Endothelial cell of umbilical vein (primary cell): ENCODE measurements at regions of chr1 and their contacts with region 1.

Region 1: GRCh38 chr1:152654110-152654509 is 9.1 kb upstream of the LCE2D start:
- DNase-seq: peak; percentile 53
- H3K4me3 ChIP-seq: no peak overlapping the region
- H3K27ac ChIP-seq: no peak overlapping the region
- H3K4me1 ChIP-seq: no peaks in the 10 kb centered on the region
- H3K27me3 ChIP-seq: no peaks in the 10 kb centered on the region
- CTCF ChIP-seq: peak; percentile 68 to 81
- POLR2A ChIP-seq: no peak

Region 2: GRCh38 chr1:152440635-152441471 is 213.3 kb before region 1 on chr1:
- CTCF ChIA-PET with region 1: no interaction called
- POLR2A ChIA-PET with region 1: no interaction called
- dilution Hi-C with region 1: no loop called
- intact Hi-C with region 1: no loop called
- DNase-seq: peak; percentile 57
- H3K4me3 ChIP-seq: no peak overlapping the region
- H3K27ac ChIP-seq: no peak overlapping the region
- H3K4me1 ChIP-seq: no peaks in the 10 kb centered on the region
- H3K27me3 ChIP-seq: peaks cover 0 to 4% of the 10 kb centered on the region in 2 experiments
- CTCF ChIP-seq: peak; percentile 73 to 87
- POLR2A ChIP-seq: no peak

Region 3: DNA sequence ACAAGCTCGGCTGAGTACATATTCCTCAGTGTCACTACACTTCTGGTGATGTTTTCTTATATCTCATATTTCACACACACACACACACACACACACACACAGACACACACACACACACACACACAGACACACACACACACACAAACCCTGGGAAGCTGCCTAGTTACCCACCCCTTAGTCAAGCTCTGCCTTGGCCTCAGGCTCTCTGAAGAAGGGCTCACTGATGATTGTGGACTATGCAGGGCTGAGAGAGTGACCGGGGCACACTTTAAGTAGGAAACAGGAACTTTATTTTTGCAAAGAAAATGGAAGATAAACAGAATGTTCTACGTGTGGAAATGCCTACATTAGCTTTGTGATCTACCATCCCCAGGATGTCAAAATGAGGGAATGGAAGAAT is 10.2 kb before region 1 on chr1:
- CTCF ChIA-PET with region 1: interaction called, 17 read pairs
- POLR2A ChIA-PET with region 1: no interaction called
- dilution Hi-C with region 1: no loop called
- intact Hi-C with region 1: no loop called
- DNase-seq: no peak
- H3K4me3 ChIP-seq: no peak overlapping the region
- H3K27ac ChIP-seq: no peak overlapping the region
- H3K4me1 ChIP-seq: no peaks in the 10 kb centered on the region
- H3K27me3 ChIP-seq: no peaks in the 10 kb centered on the region
- CTCF ChIP-seq: no peak
- POLR2A ChIP-seq: no peak

Region 4: GRCh38 chr1:152679459-152679858 is 25.3 kb after region 1 on chr1:
- CTCF ChIA-PET with region 1: no interaction called
- POLR2A ChIA-PET with region 1: no interaction called
- dilution Hi-C with region 1: no loop called
- intact Hi-C with region 1: no loop called
- DNase-seq: no peak
- H3K4me3 ChIP-seq: no peak overlapping the region
- H3K27ac ChIP-seq: no peak overlapping the region
- H3K4me1 ChIP-seq: no peaks in the 10 kb centered on the region
- H3K27me3 ChIP-seq: no peaks in the 10 kb centered on the region
- CTCF ChIP-seq: no peak
- POLR2A ChIP-seq: no peak

Region 5: GRCh38 chr1:152725261-152725660 is 71.2 kb after region 1 on chr1:
- CTCF ChIA-PET with region 1: no interaction called
- POLR2A ChIA-PET with region 1: no interaction called
- dilution Hi-C with region 1: no loop called
- intact Hi-C with region 1: no loop called
- DNase-seq: no peak
- H3K4me3 ChIP-seq: no peak overlapping the region
- H3K27ac ChIP-seq: no peak overlapping the region
- H3K4me1 ChIP-seq: no peaks in the 10 kb centered on the region
- H3K27me3 ChIP-seq: no peaks in the 10 kb centered on the region
- CTCF ChIP-seq: no peak
- POLR2A ChIP-seq: no peak

Region 6: DNA sequence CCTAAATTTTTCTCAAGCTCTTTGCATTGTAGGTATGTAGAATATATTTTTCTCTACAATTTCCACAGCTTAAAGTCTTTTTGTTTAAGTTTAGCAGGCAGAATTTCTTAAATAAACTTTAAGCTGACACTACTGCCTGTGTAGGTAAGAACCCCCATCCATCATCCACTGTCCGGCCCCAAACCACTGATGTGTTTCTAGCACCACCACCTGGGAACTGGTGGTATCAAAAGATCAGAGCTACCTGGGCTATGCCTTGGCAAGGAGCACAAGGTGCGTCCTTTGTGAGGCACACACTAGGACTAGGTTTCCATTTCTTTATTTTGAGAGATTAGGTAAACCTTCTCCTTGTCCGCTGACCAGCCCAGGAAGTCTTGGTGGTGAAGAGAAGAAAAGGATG is 538.6 kb after region 1 on chr1:
- CTCF ChIA-PET with region 1: interaction called, 24 read pairs
- POLR2A ChIA-PET with region 1: no interaction called
- dilution Hi-C with region 1: no loop called
- intact Hi-C with region 1: no loop called
- DNase-seq: no peak
- H3K4me3 ChIP-seq: no peak overlapping the region
- H3K27ac ChIP-seq: no peak overlapping the region
- H3K4me1 ChIP-seq: no peaks in the 10 kb centered on the region
- H3K27me3 ChIP-seq: no peaks in the 10 kb centered on the region
- CTCF ChIP-seq: peak; percentile 7 to 16
- POLR2A ChIP-seq: no peak

Region 7: GRCh38 chr1:153220606-153221303 is 566.6 kb after region 1 on chr1:
- CTCF ChIA-PET with region 1: interaction called, 8 read pairs
- POLR2A ChIA-PET with region 1: no interaction called
- dilution Hi-C with region 1: no loop called
- intact Hi-C with region 1: loop called (anchors 1 kb)
- DNase-seq: no peak
- H3K4me3 ChIP-seq: no peak overlapping the region
- H3K27ac ChIP-seq: no peak overlapping the region
- H3K4me1 ChIP-seq: no peaks in the 10 kb centered on the region
- H3K27me3 ChIP-seq: no peaks in the 10 kb centered on the region
- CTCF ChIP-seq: no peak
- POLR2A ChIP-seq: no peak